H1 (cell line): ENCODE measurements at regions of chr2 and their contacts with region 1.

Region 1: GRCh38 chr2:229910832-229911412 is 10.9 kb downstream of the TRIP12 start:
- DNase-seq: no peak
- H3K4me3 ChIP-seq: no peak overlapping the region
- H3K27ac ChIP-seq: no peak overlapping the region
- H3K4me1 ChIP-seq: peaks cover 0 to 3% (median 1%) of the 10 kb centered on the region in 4 experiments; a peak in 2 of 7 replicates
- H3K27me3 ChIP-seq: no peaks in the 10 kb centered on the region
- CTCF ChIP-seq: peak in 2 of 3 experiments; percentile 48 to 66; a peak in 3 of 4 replicates
- EP300 ChIP-seq: no peak
- POLR2A ChIP-seq: no peak
- RAD21 ChIP-seq: peak; percentile 51 to 57

Region 2: GRCh38 chr2:229900012-229900411 is 10.9 kb before region 1 on chr2:
- CTCF ChIA-PET with region 1: interaction called, 16 read pairs
- POLR2A ChIA-PET with region 1: interaction called, 3 read pairs
- DNase-seq: no peak
- H3K4me3 ChIP-seq: no peak overlapping the region
- H3K27ac ChIP-seq: no peak overlapping the region
- H3K4me1 ChIP-seq: peaks cover 0 to 3% (median 0%) of the 10 kb centered on the region in 4 experiments; a peak in 1 of 7 replicates
- H3K27me3 ChIP-seq: no peaks in the 10 kb centered on the region
- CTCF ChIP-seq: no peak
- EP300 ChIP-seq: no peak
- POLR2A ChIP-seq: no peak
- RAD21 ChIP-seq: no peak